ENCODE measurements at regions of chr10 and their contacts with region 1.

Region 1: DNA sequence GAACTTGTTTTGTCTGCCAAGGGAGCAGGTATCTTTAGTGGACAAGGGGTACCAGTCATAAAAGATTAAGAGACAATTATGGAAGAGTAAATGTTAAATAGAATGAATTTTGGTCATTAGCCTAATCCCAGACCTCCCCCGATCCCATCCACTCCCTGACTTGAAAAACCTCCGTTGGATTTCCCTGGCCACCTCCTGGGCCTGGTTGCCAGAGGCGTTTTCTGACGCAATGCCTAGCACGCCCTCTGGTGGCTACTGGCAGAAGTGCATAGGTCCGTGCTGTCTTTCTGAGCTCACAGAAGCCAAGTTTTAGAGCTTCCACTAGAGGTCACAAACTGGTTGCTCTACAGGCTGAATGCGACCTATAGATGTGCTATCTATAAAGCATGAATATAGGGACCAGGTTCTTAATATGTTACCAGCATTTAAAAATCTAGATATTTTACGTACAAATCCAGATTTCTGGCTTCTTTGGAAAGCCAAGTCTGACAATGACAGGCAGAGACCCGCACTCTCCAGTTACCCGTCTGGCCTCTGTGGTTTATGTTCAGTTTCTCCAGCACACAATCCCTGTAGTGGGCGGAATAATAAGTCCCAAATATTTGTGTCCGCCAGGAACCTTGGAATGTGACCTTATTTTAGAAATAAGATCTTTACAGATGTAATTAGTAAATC is 39.8 kb downstream of the SPOCK2 start:
- DNase-seq: peak; percentile 95

Region 2: DNA sequence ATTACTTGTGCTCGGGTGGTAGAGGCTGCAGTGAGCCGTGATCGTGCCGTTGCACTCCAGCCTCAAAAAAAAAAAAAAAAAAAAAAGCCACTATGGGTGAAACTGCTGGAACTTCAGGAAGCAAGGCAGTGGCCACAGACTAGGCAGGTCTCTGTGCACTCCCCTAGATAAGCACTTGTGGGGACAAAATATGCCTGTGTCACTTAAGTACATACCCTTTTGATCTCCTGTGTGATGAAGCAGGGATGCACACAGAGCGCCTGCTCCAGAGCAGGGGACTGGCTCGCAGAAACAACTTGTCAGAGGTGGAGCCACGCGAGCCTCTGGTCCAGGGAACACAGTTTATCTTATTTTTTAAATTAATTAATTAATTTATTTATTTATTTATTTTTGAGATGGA is 154.7 kb before region 1 on chr10:
- intact Hi-C with region 1: loop called (anchors 2 kb)
- DNase-seq: no peak

Region 3: DNA sequence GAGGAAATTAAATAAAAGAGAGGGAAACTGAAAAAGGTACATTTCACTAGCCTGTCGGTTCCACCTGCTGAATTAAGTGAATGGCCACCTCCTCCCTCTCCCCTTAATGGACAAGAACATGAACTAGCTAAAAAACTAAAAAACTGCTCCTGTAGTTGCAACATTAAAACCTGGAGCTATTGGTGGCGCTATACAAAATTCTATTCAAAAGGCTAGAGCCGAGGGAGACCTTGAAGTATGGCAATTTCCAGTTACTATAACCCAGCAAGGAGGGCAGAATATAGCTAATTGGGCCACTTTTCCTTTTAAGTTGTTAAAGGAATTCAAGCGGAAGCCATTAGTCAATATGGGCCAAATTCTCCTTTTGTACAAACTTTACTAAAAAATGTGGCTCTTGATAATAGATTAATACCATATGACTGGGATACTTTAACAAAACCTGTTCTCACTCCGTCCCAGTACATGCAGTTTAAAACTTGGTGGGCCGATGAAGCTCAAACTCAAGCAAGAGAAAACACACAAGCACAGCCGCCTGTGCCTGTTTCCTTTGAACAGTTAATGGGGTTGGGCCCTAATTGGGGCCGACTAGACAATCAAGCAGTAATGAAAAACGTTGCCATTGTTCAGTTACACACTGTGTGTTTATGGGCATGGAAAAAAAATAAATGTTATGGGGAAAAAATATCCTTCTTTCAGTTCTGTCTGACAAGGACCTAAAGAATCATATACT is 90.9 kb before region 1 on chr10:
- intact Hi-C with region 1: loop called (anchors 1 kb)
- DNase-seq: no peak

Region 4: GRCh38 chr10:71975891-71976725 is 72.5 kb before region 1 on chr10:
- intact Hi-C with region 1: no loop called
- DNase-seq: no peak

Region 5: GRCh38 chr10:72223743-72224101 is 175.1 kb after region 1 on chr10:
- intact Hi-C with region 1: loop called (anchors 5 kb)
- DNase-seq: no peak

Region 6: DNA sequence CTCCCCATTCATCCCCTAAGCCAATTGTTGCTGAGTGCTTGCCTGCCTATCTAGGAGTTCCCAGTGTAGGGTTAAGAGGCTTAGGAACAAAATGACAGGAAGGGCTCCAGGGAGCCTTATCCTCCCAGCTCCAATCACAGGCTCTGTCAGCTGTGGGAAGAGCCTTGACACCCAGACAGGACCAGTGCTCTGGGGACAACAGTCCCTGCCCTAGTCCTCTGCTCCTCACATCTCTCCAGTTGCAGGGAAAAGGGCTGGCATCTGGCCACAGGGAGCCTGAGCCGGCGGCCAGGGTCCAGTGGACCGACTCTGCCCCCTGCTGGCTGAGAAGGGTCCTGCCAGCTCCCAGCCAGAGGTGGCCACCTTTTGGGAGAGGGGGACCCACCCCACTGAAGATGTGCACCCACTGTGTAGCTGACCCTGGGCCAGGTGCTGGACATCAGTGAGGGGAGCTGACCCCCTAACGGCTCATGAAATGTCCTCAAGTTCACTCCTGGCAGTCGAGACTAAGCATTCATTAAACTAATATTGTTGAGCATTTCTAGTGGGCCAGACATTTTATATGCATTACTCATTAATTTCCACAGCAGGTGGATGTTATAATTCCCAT is 288.5 kb after region 1 on chr10:
- intact Hi-C with region 1: loop called (anchors 2 kb)
- DNase-seq: peak; percentile 94

Measured in cardiac septum (tissue), 1 donor.